ENCODE measurements at regions of chr18 and their contacts with region 1.

Region 1: GRCh38 chr18:51051105-51051712 is 21.2 kb downstream of the SMAD4 start:
- DNase-seq: peak in 1 of 2 donors; percentile 79
- ATAC-seq: peak; percentile 74 to 85 (median 84)
- H3K4me3 ChIP-seq: no peak overlapping the region
- H3K4me3 Mint-ChIP-seq: no peak overlapping the region
- H3K27ac ChIP-seq: no peak overlapping the region
- H3K27ac Mint-ChIP-seq: peak overlapping the region; percentile 69 to 81
- H3K4me1 ChIP-seq: no peaks in the 10 kb centered on the region
- H3K4me1 Mint-ChIP-seq: peaks cover 23 to 35% of the 10 kb centered on the region in 2 donors
- H3K27me3 ChIP-seq: no peaks in the 10 kb centered on the region
- H3K27me3 Mint-ChIP-seq: no peaks in the 10 kb centered on the region
- CTCF ChIP-seq: peak; percentile 89

Region 2: GRCh38 chr18:50967714-50968661 is 83.2 kb before region 1 on chr18 and contains the start of gene ELAC1:
- intact Hi-C with region 1: loop called (anchors 10 kb)
- DNase-seq: peak; percentile 71 to 82
- ATAC-seq: peak; percentile 91 to 96 (median 93)
- H3K4me3 ChIP-seq: peak within 1 kb of the TSS; percentile 63
- H3K4me3 Mint-ChIP-seq: peak within 1 kb of the TSS; percentile 91
- H3K27ac ChIP-seq: peak within 1 kb of the TSS; percentile 83
- H3K27ac Mint-ChIP-seq: peak within 1 kb of the TSS; percentile 58 to 73
- H3K4me1 ChIP-seq: peaks cover 7% of the 10 kb centered on the region
- H3K4me1 Mint-ChIP-seq: peaks cover 17 to 25% of the 10 kb centered on the region in 2 donors
- H3K27me3 ChIP-seq: no peaks in the 10 kb centered on the region
- H3K27me3 Mint-ChIP-seq: no peaks in the 10 kb centered on the region
- CTCF ChIP-seq: no peak
- total RNA-seq, gene ELAC1: 7.9 to 10.0 (median 8.9) TPM